ENCODE measurements at regions of chr3 and their contacts with region 1.

Region 1: DNA sequence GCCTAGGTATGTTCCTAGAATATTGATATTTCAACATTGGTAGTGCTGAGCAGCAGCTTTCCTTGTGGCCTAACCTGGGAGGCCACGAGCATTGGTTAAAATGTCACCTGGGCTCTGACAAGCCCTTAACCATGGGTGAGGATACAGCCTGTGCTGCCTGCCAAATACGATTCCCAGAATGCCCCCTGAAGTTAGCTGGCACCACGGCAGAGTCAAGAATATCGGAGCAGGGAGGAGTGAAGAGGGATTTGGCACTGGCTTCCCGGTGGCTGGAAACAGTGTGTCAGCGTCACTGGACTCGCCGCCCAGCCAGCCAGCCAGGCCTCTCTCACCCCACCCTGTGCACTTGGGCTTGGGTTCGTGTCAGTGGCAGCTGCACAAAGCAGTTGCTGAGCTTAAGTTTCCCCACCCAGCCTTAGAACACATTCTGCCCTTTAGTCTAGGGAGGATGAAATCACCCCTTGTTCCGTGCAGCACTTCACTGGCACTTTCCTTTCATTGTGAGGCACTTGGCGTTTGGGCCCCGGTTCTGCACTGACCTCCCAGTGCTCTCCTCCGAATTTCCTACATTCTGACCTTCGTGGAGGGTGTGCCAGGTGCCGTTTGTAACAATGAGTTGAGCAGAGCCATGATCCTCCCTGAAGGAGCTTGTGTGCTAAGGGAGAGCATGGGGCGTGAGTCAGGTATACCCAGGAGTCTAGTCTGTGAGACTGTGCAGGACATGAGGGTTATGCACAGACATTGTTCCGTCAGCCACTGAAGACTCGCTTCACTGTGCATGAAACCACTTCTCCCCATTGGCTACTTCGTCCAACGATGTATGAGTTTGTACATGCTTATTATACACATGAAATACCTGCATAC is 152.8 kb upstream of the BHLHE40 start:
- DNase-seq: no peak
- ATAC-seq: peak; percentile 53
- H3K4me3 Mint-ChIP-seq: peak overlapping the region; percentile 59
- H3K27ac Mint-ChIP-seq: peak overlapping the region; percentile 3
- H3K4me1 Mint-ChIP-seq: peaks cover 85% of the 10 kb centered on the region
- H3K27me3 Mint-ChIP-seq: no peaks in the 10 kb centered on the region
- CTCF ChIP-seq: no peak

Region 2: GRCh38 chr3:4218456-4219226 is 607.8 kb before region 1 on chr3:
- CTCF ChIA-PET with region 1: no interaction called
- POLR2A ChIA-PET with region 1: no interaction called
- intact Hi-C with region 1: no loop called
- DNase-seq: no peak
- ATAC-seq: no peak
- H3K4me3 Mint-ChIP-seq: no peak overlapping the region
- H3K27ac Mint-ChIP-seq: no peak overlapping the region
- H3K4me1 Mint-ChIP-seq: peaks cover 23% of the 10 kb centered on the region
- H3K27me3 Mint-ChIP-seq: no peaks in the 10 kb centered on the region
- CTCF ChIP-seq: no peak

Region 3: GRCh38 chr3:4807381-4808280 is 18.8 kb before region 1 on chr3:
- CTCF ChIA-PET with region 1: no interaction called
- POLR2A ChIA-PET with region 1: interaction called, 5 read pairs
- intact Hi-C with region 1: loop called (anchors 2 kb)
- DNase-seq: no peak
- ATAC-seq: no peak
- H3K4me3 Mint-ChIP-seq: no peak overlapping the region
- H3K27ac Mint-ChIP-seq: peak overlapping the region; percentile 59
- H3K4me1 Mint-ChIP-seq: no peaks in the 10 kb centered on the region
- H3K27me3 Mint-ChIP-seq: no peaks in the 10 kb centered on the region
- CTCF ChIP-seq: no peak

Region 4: DNA sequence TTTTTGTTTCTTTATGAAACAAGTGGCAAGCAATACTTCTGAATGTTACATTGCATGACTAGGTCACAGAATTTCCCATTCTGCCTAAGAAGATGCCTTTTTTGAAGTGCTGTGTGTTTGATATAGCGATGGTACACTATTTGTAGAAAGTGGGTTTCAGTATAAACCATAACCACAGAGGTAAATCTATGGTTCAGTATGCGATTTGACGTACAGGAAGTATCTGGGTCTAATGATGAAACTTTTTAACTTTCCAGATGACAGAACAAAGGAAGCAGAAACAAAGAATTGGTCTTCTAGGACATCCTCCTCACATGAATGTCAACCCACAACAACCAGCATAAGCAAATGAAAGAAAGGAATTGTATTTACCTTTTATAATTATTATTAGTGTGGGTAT is 19.4 kb after region 1 on chr3:
- CTCF ChIA-PET with region 1: interaction called, 3 read pairs
- POLR2A ChIA-PET with region 1: interaction called, 16 read pairs
- intact Hi-C with region 1: loop called (anchors 1 kb)
- DNase-seq: no peak
- ATAC-seq: peak; percentile 66
- H3K4me3 Mint-ChIP-seq: peak overlapping the region; percentile 16
- H3K27ac Mint-ChIP-seq: peak overlapping the region; percentile 69
- H3K4me1 Mint-ChIP-seq: peaks cover 72% of the 10 kb centered on the region
- H3K27me3 Mint-ChIP-seq: no peaks in the 10 kb centered on the region
- CTCF ChIP-seq: no peak

Measured in activated B cell treated with CpG ODN at 0.5 μM for 24 hours (primary cell).